ENCODE measurements at regions of chr2 and their contacts with region 1.

Region 1: DNA sequence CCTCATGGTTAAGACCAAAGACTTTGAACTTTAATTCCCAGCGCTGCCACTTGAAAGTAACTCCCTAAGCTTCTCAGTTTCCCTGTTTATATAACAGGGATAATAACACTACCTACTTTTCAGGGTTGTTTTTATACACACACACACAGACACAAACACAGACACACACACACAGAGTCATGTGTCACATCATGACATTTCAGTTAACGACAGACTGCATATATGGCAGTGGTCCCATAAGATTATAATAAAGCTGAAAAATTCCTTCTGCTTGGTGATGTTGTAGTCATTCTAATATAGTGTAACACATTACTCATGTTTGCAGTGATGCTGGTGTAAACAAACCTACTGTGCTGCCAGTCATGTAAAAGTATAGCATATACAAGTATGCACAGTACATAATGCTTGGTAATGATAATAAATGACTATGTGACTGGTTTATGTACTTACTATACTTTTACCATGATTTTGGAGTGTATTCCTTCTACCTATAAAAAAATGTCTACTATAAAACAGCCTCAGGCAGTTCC is 89.2 kb upstream of the ITGA4 start:
- DNase-seq: no peak
- H3K4me3 ChIP-seq: no peak overlapping the region
- H3K27ac ChIP-seq: no peak overlapping the region
- H3K4me1 ChIP-seq: peaks cover 22% of the 10 kb centered on the region
- CTCF ChIP-seq: no peak

Region 2: DNA sequence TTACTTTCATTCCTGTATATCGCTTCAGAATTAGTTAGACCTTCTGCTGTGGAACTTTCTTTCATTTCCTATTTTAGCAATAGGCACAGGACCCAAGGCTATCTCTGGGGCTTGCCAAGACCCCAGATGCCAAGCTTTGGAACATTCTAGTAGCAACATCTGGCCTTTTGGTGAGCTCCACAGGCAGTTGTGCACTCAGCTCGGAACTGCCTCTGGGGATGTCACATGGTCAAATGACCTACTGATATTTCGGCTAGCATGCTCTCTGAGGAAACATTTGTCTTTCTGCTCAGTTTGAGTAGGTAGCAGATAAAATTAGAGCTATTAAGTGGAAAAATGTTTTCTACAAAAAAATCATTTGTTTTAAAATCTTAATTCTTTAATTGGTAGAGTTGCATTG is 12.6 kb after region 1 on chr2:
- CTCF ChIA-PET with region 1: interaction called, 3 read pairs
- POLR2A ChIA-PET with region 1: interaction called, 10 read pairs
- intact Hi-C with region 1: no loop called
- DNase-seq: no peak
- H3K4me3 ChIP-seq: no peak overlapping the region
- H3K27ac ChIP-seq: no peak overlapping the region
- H3K4me1 ChIP-seq: peaks cover 11% of the 10 kb centered on the region
- CTCF ChIP-seq: no peak

Region 3: DNA sequence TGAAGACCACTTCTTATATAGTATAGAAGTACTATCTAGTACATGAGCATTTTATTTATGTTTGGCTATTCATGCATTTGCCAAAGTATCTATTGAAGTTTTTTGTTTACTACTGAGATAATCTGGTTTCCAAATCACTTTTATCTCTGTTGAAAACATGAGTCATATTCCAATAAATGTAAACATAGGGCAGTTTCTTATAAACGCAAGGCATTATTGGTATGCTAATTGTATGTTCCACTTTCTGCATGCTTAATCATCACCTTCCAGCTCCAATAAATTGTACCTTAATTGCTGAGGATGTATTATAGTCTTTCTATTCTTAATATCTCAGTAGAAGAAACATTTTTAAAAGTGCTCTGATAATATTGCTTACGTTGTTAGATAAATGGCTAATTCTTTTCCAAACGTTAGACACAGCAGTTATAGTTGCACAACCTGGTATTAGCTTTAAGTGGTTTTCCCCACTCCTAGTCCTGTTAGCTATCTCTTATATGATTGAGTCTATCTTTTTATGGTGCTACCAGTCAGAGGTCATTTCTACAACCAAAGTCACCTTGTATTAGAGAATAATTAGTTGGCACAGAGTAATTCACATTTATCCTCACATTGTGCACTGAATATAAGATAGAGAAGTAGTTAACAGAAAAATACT is 106.4 kb after region 1 on chr2:
- CTCF ChIA-PET with region 1: no interaction called
- POLR2A ChIA-PET with region 1: no interaction called
- intact Hi-C with region 1: no loop called
- DNase-seq: no peak
- H3K4me3 ChIP-seq: no peak overlapping the region
- H3K27ac ChIP-seq: no peak overlapping the region
- H3K4me1 ChIP-seq: no peaks in the 10 kb centered on the region
- CTCF ChIP-seq: no peak

Measured in OCI-LY7 (cell line).